ENCODE measurements at regions of chr5 and their contacts with region 1.

Region 1: DNA sequence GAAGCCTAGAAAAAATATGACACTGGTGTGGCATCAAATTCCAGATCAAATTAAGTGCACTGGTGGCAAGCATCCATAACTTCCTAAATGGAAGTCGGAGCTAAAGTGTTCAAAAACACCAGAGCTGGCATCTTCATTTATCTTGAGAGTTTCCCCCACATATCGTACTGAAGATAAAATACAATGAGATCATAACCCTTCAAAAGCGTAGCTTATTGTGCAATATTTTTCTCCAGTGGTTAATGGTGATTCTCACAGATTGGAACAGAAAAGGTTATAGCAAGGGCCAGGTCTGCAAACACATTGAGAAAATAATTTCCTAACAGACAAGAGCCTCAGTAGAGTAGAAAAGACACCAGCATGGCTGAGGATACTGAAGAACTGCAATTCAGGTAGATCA is 147.6 kb downstream of the SEMA5A start:
- DNase-seq: no peak
- ATAC-seq: peak in 1 of 4 donors; percentile 21
- H3K4me3 ChIP-seq: no peak overlapping the region
- H3K27ac ChIP-seq: no peak overlapping the region
- H3K4me1 ChIP-seq: peaks cover 0 to 12% (median 4%) of the 10 kb centered on the region in 12 donors
- H3K27me3 ChIP-seq: no peaks in the 10 kb centered on the region
- CTCF ChIP-seq: no peak
- POLR2A ChIP-seq: no peak

Region 2: GRCh38 chr5:9324348-9325077 is 73.7 kb before region 1 on chr5:
- intact Hi-C with region 1: no loop called
- DNase-seq: no peak
- ATAC-seq: no peak
- H3K4me3 ChIP-seq: no peak overlapping the region
- H3K27ac ChIP-seq: no peak overlapping the region
- H3K4me1 ChIP-seq: peaks cover 0 to 7% (median 0%) of the 10 kb centered on the region in 12 donors
- H3K27me3 ChIP-seq: no peaks in the 10 kb centered on the region
- CTCF ChIP-seq: no peak
- POLR2A ChIP-seq: no peak

Region 3: DNA sequence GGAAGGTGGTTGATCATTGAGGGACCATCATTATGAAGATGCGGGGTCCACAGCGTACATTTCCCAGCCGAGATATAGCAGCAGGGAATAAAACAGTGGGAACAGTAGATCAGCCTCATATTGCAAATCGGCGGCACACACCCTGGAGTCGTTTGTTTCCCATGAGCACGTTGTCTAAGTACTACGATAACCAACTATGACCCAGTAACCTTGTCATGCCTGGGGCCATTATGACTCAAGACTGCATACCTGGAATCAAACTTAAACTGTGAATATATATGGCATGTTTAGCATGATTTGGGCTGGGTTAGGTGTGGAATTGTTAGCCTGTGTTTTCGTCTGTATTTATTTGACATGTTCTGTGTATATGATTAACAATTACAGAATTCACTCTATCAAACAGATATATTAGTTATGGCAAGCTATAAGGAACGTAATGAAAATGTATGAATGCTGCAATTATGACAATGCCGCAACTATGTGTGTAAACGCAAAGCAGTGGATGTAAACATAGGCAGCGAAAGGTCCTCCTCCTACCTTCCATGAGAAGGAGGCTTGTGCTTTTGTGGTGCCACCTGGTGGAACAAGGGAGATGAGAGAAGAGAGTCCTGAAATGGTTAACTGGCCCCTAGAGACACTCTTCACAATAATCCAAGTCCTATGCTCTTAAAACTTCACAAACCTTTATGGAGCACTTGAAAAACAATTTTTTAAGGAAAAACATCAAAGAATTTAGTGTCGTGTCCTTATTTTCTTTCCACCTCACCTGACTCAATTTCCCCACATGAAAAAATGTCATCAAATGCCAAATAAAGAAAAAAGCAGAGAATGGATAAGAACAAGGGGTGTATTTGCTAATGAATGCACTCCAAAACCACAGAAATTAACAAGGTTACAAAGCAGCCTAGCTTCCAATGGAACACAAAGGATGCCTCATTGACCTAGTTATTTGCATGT is 100.6 kb after region 1 on chr5:
- intact Hi-C with region 1: loop called in 1 of 10 experiments (anchors 10 kb)
- DNase-seq: no peak
- ATAC-seq: no peak
- H3K4me3 ChIP-seq: no peak overlapping the region
- H3K27ac ChIP-seq: peak overlapping the region in 2 of 12 donors; percentile 7 to 32
- H3K4me1 ChIP-seq: peaks cover 0 to 40% (median 19%) of the 10 kb centered on the region in 12 donors
- H3K27me3 ChIP-seq: no peaks in the 10 kb centered on the region
- CTCF ChIP-seq: peak in 7 of 12 donors; percentile 12 to 40 (median 23)
- POLR2A ChIP-seq: no peak

Measured in heart left ventricle (tissue), 16 donors.